Activated CD4-positive, alpha-beta T cell treated with anti-CD3 and anti-CD28 coated beads, Interleukin-2, amount 10 ng/mL, durations not matched to agents 24 days and 14 days (primary cell): ENCODE measurements at regions of chr6 and their contacts with region 1.

Region 1: GRCh38 chr6:152301764-152302568 is 335.2 kb downstream of the SYNE1 start:
- DNase-seq: peak; percentile 97
- H3K4me3 Mint-ChIP-seq: peak overlapping the region; percentile 94
- H3K27ac Mint-ChIP-seq: peak overlapping the region; percentile 99
- H3K4me1 Mint-ChIP-seq: peaks cover 23% of the 10 kb centered on the region
- H3K27me3 Mint-ChIP-seq: no peaks in the 10 kb centered on the region

Region 2: GRCh38 chr6:152338335-152339125 is 36.6 kb after region 1 on chr6:
- intact Hi-C with region 1: loop called (anchors 1 kb)
- DNase-seq: peak; percentile 87
- H3K4me3 Mint-ChIP-seq: no peak overlapping the region
- H3K27ac Mint-ChIP-seq: no peak overlapping the region
- H3K4me1 Mint-ChIP-seq: peaks cover 2% of the 10 kb centered on the region
- H3K27me3 Mint-ChIP-seq: peaks cover 16% of the 10 kb centered on the region